Gastrocnemius medialis (tissue), 4 donors: ENCODE measurements at regions of chr10 and their contacts with region 1.

Region 1: DNA sequence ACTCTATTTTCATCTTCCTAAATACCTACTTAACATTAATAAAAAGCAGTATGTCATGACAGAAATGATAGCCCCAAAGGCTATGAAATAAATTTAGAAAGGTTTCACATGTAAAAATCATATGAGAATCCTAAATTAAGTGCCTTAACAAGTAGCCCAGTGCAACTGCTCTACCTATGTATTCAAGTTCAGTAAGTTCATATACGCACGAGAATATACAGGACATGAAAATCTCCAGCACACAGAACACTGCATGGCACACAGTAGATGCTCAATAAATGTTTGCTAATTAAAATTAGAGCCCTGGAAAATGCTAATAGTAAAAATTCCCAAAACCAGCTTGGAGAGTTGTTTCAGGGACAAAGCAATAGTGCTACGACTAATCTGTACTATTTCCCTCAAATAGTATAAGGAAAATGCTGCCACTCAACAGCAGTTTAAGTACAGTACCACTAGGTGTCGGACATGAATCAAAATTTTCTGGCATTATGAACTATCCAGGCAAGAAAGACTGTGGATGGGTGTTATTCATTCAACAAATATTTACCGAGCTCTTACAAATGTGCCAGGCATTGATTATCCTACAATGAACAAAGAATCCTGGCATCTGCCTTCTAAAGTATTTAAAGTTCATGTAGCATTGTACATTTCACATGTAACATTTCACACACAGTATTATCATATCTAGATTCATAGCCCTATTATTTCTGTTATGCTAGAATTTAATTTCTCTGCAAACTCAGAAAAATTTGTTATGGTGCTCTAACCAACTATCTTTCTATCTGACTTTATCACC is 80.9 kb downstream of the ARHGAP21 start:
- DNase-seq: no peak
- ATAC-seq: peak; percentile 88 to 95
- H3K4me3 ChIP-seq: no peak overlapping the region
- H3K27ac ChIP-seq: no peak overlapping the region
- H3K4me1 ChIP-seq: peaks cover 8 to 21% of the 10 kb centered on the region in 2 donors
- H3K27me3 ChIP-seq: no peaks in the 10 kb centered on the region
- CTCF ChIP-seq: peak; percentile 64 to 84 (median 76)
- POLR2A ChIP-seq: no peak

Region 2: DNA sequence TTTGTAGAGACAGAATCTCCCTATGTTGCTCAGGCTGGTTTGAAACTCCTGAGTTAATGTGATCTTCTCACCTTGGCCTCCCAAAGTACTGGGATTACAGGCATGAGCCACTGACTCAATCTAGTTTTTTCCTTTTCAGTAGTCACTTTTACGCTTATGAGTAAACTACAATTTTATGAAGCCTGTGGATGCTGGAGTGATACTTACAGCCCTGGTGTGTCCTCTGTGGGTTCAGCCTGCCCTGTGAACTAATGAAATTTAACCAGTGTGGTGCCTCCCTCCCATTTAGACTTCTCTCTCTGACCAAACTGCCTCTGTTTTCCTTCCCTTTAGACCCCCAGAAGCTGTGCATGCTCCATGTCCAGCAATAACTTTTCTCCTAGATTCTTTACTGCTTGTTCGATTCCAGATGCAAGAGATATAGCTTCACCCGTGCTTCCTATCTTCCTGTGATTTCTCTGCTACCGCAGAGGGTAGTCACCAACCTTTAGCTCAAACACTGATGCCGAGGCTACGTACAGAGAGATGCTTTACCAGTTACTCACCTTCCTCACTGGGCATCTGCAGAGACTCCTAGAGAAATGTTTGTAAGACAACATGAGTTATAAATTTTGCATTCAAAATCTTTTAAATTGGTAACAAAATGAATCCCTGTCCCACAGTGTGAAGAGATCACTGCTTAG is 343.1 kb before region 1 on chr10:
- in situ Hi-C with region 1: no loop called
- intact Hi-C with region 1: no loop called
- DNase-seq: no peak
- ATAC-seq: no peak
- H3K4me3 ChIP-seq: no peak overlapping the region
- H3K27ac ChIP-seq: peak overlapping the region; percentile 88 to 96 (median 95)
- H3K4me1 ChIP-seq: peaks cover 37 to 47% of the 10 kb centered on the region in 2 donors
- H3K27me3 ChIP-seq: no peaks in the 10 kb centered on the region
- CTCF ChIP-seq: no peak
- POLR2A ChIP-seq: no peak

Region 3: GRCh38 chr10:24701447-24701846 is 58.6 kb after region 1 on chr10:
- in situ Hi-C with region 1: no loop called
- intact Hi-C with region 1: no loop called
- DNase-seq: no peak
- ATAC-seq: no peak
- H3K4me3 ChIP-seq: no peak overlapping the region
- H3K27ac ChIP-seq: no peak overlapping the region
- H3K4me1 ChIP-seq: peaks cover 45 to 46% of the 10 kb centered on the region in 2 donors
- H3K27me3 ChIP-seq: no peaks in the 10 kb centered on the region
- CTCF ChIP-seq: no peak
- POLR2A ChIP-seq: no peak

Region 4: GRCh38 chr10:24731942-24732341 is 89.1 kb after region 1 on chr10:
- in situ Hi-C with region 1: loop called in 1 of 4 experiments (anchors 10 kb)
- intact Hi-C with region 1: no loop called
- DNase-seq: no peak
- ATAC-seq: no peak
- H3K4me3 ChIP-seq: no peak overlapping the region
- H3K27ac ChIP-seq: no peak overlapping the region
- H3K4me1 ChIP-seq: no peaks in the 10 kb centered on the region
- H3K27me3 ChIP-seq: no peaks in the 10 kb centered on the region
- CTCF ChIP-seq: no peak
- POLR2A ChIP-seq: no peak

Region 5: GRCh38 chr10:24974976-24975375 is 332.2 kb after region 1 on chr10:
- in situ Hi-C with region 1: loop called in 3 of 4 experiments (anchors 10 to 25 kb)
- intact Hi-C with region 1: no loop called
- DNase-seq: peak; percentile 20 to 50
- ATAC-seq: peak; percentile 81 to 91
- H3K4me3 ChIP-seq: no peak overlapping the region
- H3K27ac ChIP-seq: peak overlapping the region in 1 of 4 donors; percentile 32
- H3K4me1 ChIP-seq: peaks cover 0 to 3% of the 10 kb centered on the region in 2 donors
- H3K27me3 ChIP-seq: no peaks in the 10 kb centered on the region
- CTCF ChIP-seq: no peak
- POLR2A ChIP-seq: no peak

Region 6: DNA sequence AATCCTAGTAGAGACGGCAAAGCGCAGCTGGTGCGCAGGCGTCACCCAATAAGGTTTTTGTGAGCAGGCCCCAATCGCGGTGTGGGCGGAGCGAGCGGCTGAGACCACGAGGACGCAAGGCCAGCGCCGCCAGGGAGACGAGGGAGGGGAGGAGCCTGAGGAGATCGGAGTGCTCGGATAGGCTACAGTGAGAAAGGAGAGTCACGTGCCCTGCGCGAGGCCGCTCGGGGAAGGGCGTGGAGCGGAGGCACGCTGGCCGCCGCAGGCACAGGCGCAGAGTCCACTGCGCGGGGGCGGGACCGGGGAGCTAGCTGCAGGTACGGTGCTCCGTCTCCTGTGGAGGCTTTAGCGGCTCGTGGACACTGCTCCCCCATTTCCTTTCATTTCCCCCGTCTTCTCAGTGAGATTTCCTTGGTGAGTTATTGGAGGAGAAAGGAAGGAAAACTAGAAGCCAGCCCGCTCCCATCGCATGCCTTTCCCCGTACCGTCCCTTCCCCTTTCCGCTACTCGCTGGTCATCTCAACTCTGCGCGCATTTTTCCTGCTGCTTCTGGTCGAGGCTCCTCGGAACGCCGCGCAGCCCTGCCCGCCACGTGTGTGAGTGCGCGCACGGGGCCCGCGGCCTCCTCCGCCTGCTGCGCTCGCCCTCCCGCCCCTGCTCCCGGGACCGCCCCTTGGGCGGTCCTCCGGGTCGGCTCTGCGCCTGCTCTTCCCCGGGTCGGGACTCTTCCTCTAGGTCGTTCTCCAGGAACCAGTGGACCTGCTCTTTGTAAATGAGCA is 373.7 kb after region 1 on chr10 and contains the start of gene THNSL1:
- in situ Hi-C with region 1: no loop called
- intact Hi-C with region 1: loop called (anchors 10 kb)
- DNase-seq: peak; percentile 97 to 99
- ATAC-seq: peak; percentile 94 to 98
- H3K4me3 ChIP-seq: peak within 1 kb of the TSS; percentile 78 to 87 (median 83)
- H3K27ac ChIP-seq: peak within 1 kb of the TSS; percentile 90 to 94 (median 92)
- H3K4me1 ChIP-seq: peaks cover 13 to 16% of the 10 kb centered on the region in 2 donors
- H3K27me3 ChIP-seq: no peaks in the 10 kb centered on the region
- CTCF ChIP-seq: no peak
- POLR2A ChIP-seq: peak; percentile 80 to 94
- total RNA-seq, gene THNSL1: 0.82 to 2.0 (median 1.7) TPM